ENCODE measurements at regions of chr21 and their contacts with region 1.

Region 1: GRCh38 chr21:42220138-42220701 is 1.3 kb downstream of the ABCG1 start:
- DNase-seq: peak; percentile 94
- ATAC-seq: peak; percentile 85
- H3K4me3 ChIP-seq: peak overlapping the region; percentile 72 to 92 (median 89)
- H3K4me3 Mint-ChIP-seq: peak overlapping the region; percentile 87
- H3K27ac ChIP-seq: peak overlapping the region; percentile 75 to 96
- H3K27ac Mint-ChIP-seq: peak overlapping the region; percentile 80
- H3K4me1 ChIP-seq: peaks cover 29 to 41% of the 10 kb centered on the region in 2 donors
- H3K4me1 Mint-ChIP-seq: peaks cover 47% of the 10 kb centered on the region
- H3K27me3 ChIP-seq: no peaks in the 10 kb centered on the region
- H3K27me3 Mint-ChIP-seq: no peaks in the 10 kb centered on the region
- CTCF ChIP-seq: no peak

Region 2: GRCh38 chr21:41745971-41746743 is 474.1 kb before region 1 on chr21:
- CTCF ChIA-PET with region 1: no interaction called
- POLR2A ChIA-PET with region 1: no interaction called
- intact Hi-C with region 1: no loop called
- DNase-seq: no peak
- ATAC-seq: no peak
- H3K4me3 ChIP-seq: no peak overlapping the region
- H3K4me3 Mint-ChIP-seq: no peak overlapping the region
- H3K27ac ChIP-seq: no peak overlapping the region
- H3K27ac Mint-ChIP-seq: no peak overlapping the region
- H3K4me1 ChIP-seq: no peaks in the 10 kb centered on the region
- H3K4me1 Mint-ChIP-seq: no peaks in the 10 kb centered on the region
- H3K27me3 ChIP-seq: no peaks in the 10 kb centered on the region
- H3K27me3 Mint-ChIP-seq: peaks cover 11% of the 10 kb centered on the region
- CTCF ChIP-seq: no peak

Region 3: DNA sequence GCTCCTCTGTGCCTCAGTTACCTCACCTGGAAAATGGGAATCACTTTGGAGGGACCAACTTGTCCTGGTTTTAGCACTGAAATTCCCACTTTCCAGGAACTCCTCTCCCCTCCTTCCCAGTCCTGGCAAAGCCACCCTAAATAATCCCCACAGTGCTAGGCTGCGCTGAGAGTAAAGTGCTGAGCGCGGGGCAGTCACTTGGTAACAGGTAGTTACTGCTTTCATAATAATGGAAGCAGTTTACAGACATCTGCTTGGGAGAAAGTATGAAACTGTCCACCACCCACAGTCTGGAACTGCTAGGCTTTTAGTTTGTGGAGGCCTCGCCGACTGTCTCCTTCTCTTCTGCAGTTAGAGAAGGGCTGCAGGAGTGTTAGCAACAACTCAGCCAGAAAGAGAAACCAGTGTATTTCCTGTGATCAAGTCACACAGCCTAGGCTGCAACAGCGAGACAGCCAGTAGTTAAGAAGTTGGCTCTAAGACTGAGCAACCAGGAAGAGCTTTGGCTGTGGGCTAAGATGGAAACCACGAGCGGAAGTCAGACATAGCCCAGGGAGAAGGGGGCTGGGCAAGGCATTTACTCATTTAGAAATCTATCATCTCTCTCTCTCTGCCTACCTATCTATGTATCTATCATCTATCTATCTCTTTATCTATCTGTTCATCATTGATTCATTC is 32.1 kb before region 1 on chr21:
- CTCF ChIA-PET with region 1: interaction called, 4 read pairs
- POLR2A ChIA-PET with region 1: no interaction called
- intact Hi-C with region 1: loop called (anchors 1 kb)
- DNase-seq: peak; percentile 85
- ATAC-seq: peak; percentile 97
- H3K4me3 ChIP-seq: peak overlapping the region in 3 of 5 experiments; percentile 11 to 32 (median 28)
- H3K4me3 Mint-ChIP-seq: peak overlapping the region; percentile 69
- H3K27ac ChIP-seq: peak overlapping the region; percentile 78 to 81
- H3K27ac Mint-ChIP-seq: peak overlapping the region; percentile 91
- H3K4me1 ChIP-seq: peaks cover 35 to 50% of the 10 kb centered on the region in 2 donors
- H3K4me1 Mint-ChIP-seq: peaks cover 50% of the 10 kb centered on the region
- H3K27me3 ChIP-seq: no peaks in the 10 kb centered on the region
- H3K27me3 Mint-ChIP-seq: no peaks in the 10 kb centered on the region
- CTCF ChIP-seq: no peak

Region 4: GRCh38 chr21:42209819-42210479 is 10.3 kb before region 1 on chr21:
- CTCF ChIA-PET with region 1: no interaction called
- POLR2A ChIA-PET with region 1: interaction called, 10 read pairs
- intact Hi-C with region 1: no loop called
- DNase-seq: no peak
- ATAC-seq: no peak
- H3K4me3 ChIP-seq: no peak overlapping the region
- H3K4me3 Mint-ChIP-seq: no peak overlapping the region
- H3K27ac ChIP-seq: no peak overlapping the region
- H3K27ac Mint-ChIP-seq: no peak overlapping the region
- H3K4me1 ChIP-seq: no peaks in the 10 kb centered on the region
- H3K4me1 Mint-ChIP-seq: peaks cover 1% of the 10 kb centered on the region
- H3K27me3 ChIP-seq: no peaks in the 10 kb centered on the region
- H3K27me3 Mint-ChIP-seq: no peaks in the 10 kb centered on the region
- CTCF ChIP-seq: no peak

Measured in B cell (primary cell).